Activated CD4-positive, alpha-beta memory T cell treated with anti-CD3 and anti-CD28 coated beads for 36 hours (primary cell): ENCODE measurements at regions of chr1 and their contacts with region 1.

Region 1: GRCh38 chr1:153572569-153573015 is 6.9 kb upstream of the S100A2 start:
- DNase-seq: peak; percentile 83
- H3K4me3 Mint-ChIP-seq: no peak overlapping the region
- H3K27ac Mint-ChIP-seq: peak overlapping the region; percentile 64
- H3K4me1 Mint-ChIP-seq: peaks cover 54% of the 10 kb centered on the region
- H3K27me3 Mint-ChIP-seq: peaks cover 9% of the 10 kb centered on the region

Region 2: GRCh38 chr1:153510984-153511410 is 61.6 kb before region 1 on chr1:
- CTCF ChIA-PET with region 1: interaction called, 153 read pairs
- POLR2A ChIA-PET with region 1: interaction called, 4 read pairs
- intact Hi-C with region 1: loop called (anchors 1 kb)
- DNase-seq: peak; percentile 87
- H3K4me3 Mint-ChIP-seq: no peak overlapping the region
- H3K27ac Mint-ChIP-seq: peak overlapping the region; percentile 45
- H3K4me1 Mint-ChIP-seq: peaks cover 10% of the 10 kb centered on the region
- H3K27me3 Mint-ChIP-seq: no peaks in the 10 kb centered on the region

Region 3: DNA sequence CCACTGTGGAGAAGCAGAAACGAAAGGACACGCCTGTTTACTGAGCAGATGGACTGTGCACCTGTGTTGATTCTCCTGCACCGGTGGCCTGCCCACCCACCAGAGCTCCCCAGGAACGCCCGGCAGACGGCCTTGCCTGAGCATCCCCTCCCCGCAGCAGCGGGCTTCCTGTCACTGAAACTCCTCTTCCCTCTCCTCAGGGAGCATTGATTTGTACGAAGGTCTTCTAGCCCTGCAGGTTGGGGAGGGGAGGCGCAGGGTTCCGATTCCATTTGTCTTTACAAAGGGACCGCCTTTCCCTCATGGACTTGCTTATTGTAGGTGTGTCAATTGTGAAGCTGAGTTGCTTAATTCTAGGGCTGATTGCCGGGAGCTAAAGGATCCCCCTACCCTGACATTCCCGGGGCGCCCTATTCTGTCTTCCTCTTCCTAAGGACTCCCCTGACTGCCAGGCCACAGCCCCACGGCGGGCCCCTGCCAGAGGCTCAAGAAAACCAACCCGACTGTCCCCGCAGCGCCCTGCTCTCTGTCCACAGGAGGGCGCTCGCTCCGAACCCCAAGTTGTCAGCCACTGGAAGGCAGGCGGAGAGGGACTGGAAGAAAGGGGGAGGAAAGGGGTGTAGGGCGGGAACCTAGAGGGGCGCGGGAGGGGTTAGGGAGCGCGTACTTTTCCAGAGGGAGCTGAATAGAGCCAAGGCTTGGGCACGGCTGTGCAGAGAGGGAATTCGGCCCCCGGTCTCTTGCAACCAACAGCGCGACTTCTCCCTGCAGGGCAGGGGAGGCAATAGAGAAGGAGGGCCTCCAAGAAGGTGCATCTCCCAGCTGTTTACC is 39.6 kb before region 1 on chr1:
- CTCF ChIA-PET with region 1: interaction called, 269 read pairs
- POLR2A ChIA-PET with region 1: interaction called, 99 read pairs
- intact Hi-C with region 1: loop called (anchors 1 kb)
- DNase-seq: peak; percentile 90
- H3K4me3 Mint-ChIP-seq: peak overlapping the region; percentile 91
- H3K27ac Mint-ChIP-seq: peak overlapping the region; percentile 96
- H3K4me1 Mint-ChIP-seq: peaks cover 58% of the 10 kb centered on the region
- H3K27me3 Mint-ChIP-seq: no peaks in the 10 kb centered on the region

Region 4: DNA sequence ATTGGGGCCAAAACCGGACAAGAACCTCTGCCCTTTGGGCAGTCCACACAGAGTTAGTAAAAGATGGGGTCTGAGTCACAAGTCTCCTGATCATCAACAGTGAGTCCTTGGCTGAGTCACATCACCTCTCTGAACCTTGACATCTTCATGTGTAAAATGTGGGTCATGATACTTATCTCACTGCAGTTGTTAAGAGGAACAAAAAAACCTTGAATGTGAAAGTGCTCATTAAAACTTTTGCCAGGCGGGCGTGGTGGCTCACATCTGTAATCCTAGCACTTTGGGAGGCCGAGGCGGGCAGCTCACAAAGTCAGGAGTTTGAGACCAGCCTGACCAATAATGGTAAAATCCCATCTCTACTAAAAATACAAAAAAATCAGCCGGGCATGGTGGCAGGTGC is 24.6 kb after region 1 on chr1:
- CTCF ChIA-PET with region 1: interaction called, 4 read pairs
- POLR2A ChIA-PET with region 1: no interaction called
- intact Hi-C with region 1: loop called (anchors 1 kb)
- DNase-seq: peak; percentile 51
- H3K4me3 Mint-ChIP-seq: no peak overlapping the region
- H3K27ac Mint-ChIP-seq: peak overlapping the region; percentile 69
- H3K4me1 Mint-ChIP-seq: peaks cover 17% of the 10 kb centered on the region
- H3K27me3 Mint-ChIP-seq: no peaks in the 10 kb centered on the region

Region 5: GRCh38 chr1:153626922-153627796 is 54.6 kb after region 1 on chr1 and contains the start of gene S100A13:
- CTCF ChIA-PET with region 1: interaction called, 10 read pairs
- POLR2A ChIA-PET with region 1: no interaction called
- intact Hi-C with region 1: no loop called
- DNase-seq: peak; percentile 38
- H3K4me3 Mint-ChIP-seq: no peak within 1 kb of the TSS
- H3K27ac Mint-ChIP-seq: no peak within 1 kb of the TSS
- H3K4me1 Mint-ChIP-seq: peaks cover 17% of the 10 kb centered on the region
- H3K27me3 Mint-ChIP-seq: peaks cover 7% of the 10 kb centered on the region
- total RNA-seq, gene S100A13: 11.6 to 13.6 TPM

Region 6: GRCh38 chr1:153658400-153659174 is 86.0 kb after region 1 on chr1 and contains the start of gene SNAPIN:
- CTCF ChIA-PET with region 1: interaction called, 5 read pairs
- POLR2A ChIA-PET with region 1: no interaction called
- intact Hi-C with region 1: loop called (anchors 5 kb)
- DNase-seq: peak; percentile 95
- H3K4me3 Mint-ChIP-seq: peak within 1 kb of the TSS; percentile 93
- H3K27ac Mint-ChIP-seq: peak within 1 kb of the TSS; percentile 82
- H3K4me1 Mint-ChIP-seq: peaks cover 17% of the 10 kb centered on the region
- H3K27me3 Mint-ChIP-seq: no peaks in the 10 kb centered on the region
- total RNA-seq, gene SNAPIN: 31.3 to 32.1 TPM

Region 7: GRCh38 chr1:153705485-153705884 is 132.9 kb after region 1 on chr1:
- CTCF ChIA-PET with region 1: no interaction called
- POLR2A ChIA-PET with region 1: no interaction called
- intact Hi-C with region 1: no loop called
- DNase-seq: no peak
- H3K4me3 Mint-ChIP-seq: no peak overlapping the region
- H3K27ac Mint-ChIP-seq: no peak overlapping the region
- H3K4me1 Mint-ChIP-seq: no peaks in the 10 kb centered on the region
- H3K27me3 Mint-ChIP-seq: no peaks in the 10 kb centered on the region

Region 8: GRCh38 chr1:153727463-153728304 is 155.1 kb after region 1 on chr1 and contains the start of gene INTS3:
- CTCF ChIA-PET with region 1: no interaction called
- POLR2A ChIA-PET with region 1: no interaction called
- intact Hi-C with region 1: loop called (anchors 5 kb)
- DNase-seq: peak; percentile 100
- H3K4me3 Mint-ChIP-seq: peak within 1 kb of the TSS; percentile 95
- H3K27ac Mint-ChIP-seq: peak within 1 kb of the TSS; percentile 97
- H3K4me1 Mint-ChIP-seq: peaks cover 39% of the 10 kb centered on the region
- H3K27me3 Mint-ChIP-seq: no peaks in the 10 kb centered on the region
- total RNA-seq, gene INTS3: 45.5 to 47.7 TPM